ENCODE measurements at regions of chr2 and their contacts with region 1.

Region 1: DNA sequence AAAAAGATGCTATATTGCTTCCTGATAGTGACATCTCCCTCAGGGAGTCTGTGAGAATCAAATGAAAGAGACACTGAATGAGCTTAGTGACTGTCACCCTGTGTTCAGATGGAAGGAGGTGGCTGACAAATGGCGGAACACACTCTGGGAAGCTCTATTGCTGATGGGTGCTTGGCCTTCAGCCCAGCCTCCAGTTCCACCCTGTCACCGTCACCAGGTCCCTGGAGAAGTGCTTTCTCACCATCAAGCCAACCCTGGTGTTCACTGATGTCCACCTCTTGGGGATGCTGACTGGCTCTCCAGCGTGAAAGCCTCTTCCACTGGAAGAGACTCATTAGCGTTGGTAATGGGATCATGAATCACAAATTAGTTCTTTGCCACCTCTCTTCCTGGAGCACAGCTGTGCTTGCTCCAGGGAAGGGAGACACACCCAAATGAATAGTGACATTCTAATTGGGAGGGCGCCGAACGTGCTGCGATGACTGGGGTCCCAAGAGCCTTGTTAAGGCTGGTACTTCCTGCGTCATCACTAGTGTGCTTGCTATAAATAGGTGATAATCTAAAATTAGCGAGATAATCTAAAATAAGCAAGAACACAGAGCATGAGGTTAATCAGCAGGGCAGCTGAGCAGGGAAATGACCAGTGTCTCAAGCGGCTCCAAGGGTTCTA is 154.0 kb downstream of the CLIP4 start:
- DNase-seq: no peak
- ATAC-seq: peak in 6 of 8 donors; percentile 40 to 85 (median 68)
- H3K4me3 ChIP-seq: no peak overlapping the region
- H3K27ac ChIP-seq: no peak overlapping the region
- H3K4me1 ChIP-seq: peaks cover 0 to 14% (median 4%) of the 10 kb centered on the region in 9 donors
- H3K27me3 ChIP-seq: peaks cover 0 to 20% (median 2%) of the 10 kb centered on the region in 7 donors
- CTCF ChIP-seq: no peak

Region 2: GRCh38 chr2:27980242-27980641 is 1289.0 kb before region 1 on chr2:
- intact Hi-C with region 1: loop called in 1 of 10 experiments (anchors 5 kb)
- DNase-seq: no peak
- ATAC-seq: no peak
- H3K4me3 ChIP-seq: no peak overlapping the region
- H3K27ac ChIP-seq: no peak overlapping the region
- H3K4me1 ChIP-seq: peaks cover 0 to 13% (median 0%) of the 10 kb centered on the region in 9 donors
- H3K27me3 ChIP-seq: no peaks in the 10 kb centered on the region
- CTCF ChIP-seq: no peak

Region 3: GRCh38 chr2:28681158-28681571 is 588.1 kb before region 1 on chr2:
- intact Hi-C with region 1: no loop called
- DNase-seq: no peak
- ATAC-seq: peak in 3 of 8 donors; percentile 23 to 48 (median 38)
- H3K4me3 ChIP-seq: no peak overlapping the region
- H3K27ac ChIP-seq: peak overlapping the region in 8 of 10 donors; percentile 34 to 84 (median 76)
- H3K4me1 ChIP-seq: peaks cover 5 to 79% (median 61%) of the 10 kb centered on the region in 9 donors
- H3K27me3 ChIP-seq: no peaks in the 10 kb centered on the region
- CTCF ChIP-seq: no peak

Region 4: DNA sequence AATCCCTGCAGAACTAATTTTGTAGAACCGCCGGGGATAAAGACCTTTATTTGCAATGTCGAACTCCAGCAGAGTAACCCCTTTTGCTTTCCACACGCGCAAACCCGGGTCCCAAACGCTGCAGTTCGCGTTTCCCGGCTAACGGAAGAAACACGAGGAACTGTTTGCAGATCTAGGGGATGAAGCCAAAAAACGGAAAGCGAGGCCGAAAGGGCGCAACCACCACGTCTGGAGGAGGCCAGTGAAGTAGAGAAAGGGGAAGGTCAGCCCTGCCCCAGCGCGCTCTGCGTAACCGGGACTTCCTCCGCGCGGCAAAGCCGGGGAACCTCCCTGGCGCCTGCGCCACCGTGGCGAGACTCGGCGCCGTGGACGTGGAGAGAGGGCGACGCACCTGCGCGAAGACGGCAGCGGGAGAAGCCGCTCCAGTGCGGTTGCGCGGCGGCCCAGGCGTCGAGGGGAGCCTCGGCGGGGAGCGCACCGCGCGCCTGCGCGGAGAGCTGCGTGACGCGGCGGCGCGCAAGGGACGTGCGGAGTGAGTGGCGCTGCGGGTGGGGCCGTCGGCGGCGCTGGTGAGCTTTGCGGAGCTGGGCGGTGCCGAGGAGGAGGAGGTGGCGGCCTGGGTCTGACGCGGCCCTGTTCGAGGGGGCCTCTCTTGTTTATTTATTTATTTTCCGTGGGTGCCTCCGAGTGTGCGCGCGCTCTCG is 517.8 kb before region 1 on chr2 and contains the start of gene PPP1CB:
- intact Hi-C with region 1: no loop called
- DNase-seq: peak; percentile 94 to 97
- ATAC-seq: peak; percentile 92 to 98 (median 94)
- H3K4me3 ChIP-seq: peak within 1 kb of the TSS; percentile 76 to 98 (median 94)
- H3K27ac ChIP-seq: peak within 1 kb of the TSS; percentile 95 to 100 (median 100)
- H3K4me1 ChIP-seq: peaks cover 8 to 56% (median 44%) of the 10 kb centered on the region in 9 donors
- H3K27me3 ChIP-seq: no peaks in the 10 kb centered on the region
- CTCF ChIP-seq: peak in 8 of 9 donors; percentile 21 to 55 (median 38)
- total RNA-seq, gene PPP1CB: 381 to 525 (median 432) TPM

Region 5: GRCh38 chr2:29165362-29166236 is 103.6 kb before region 1 on chr2:
- intact Hi-C with region 1: no loop called
- DNase-seq: no peak
- ATAC-seq: no peak
- H3K4me3 ChIP-seq: no peak overlapping the region
- H3K27ac ChIP-seq: no peak overlapping the region
- H3K4me1 ChIP-seq: no peaks in the 10 kb centered on the region
- H3K27me3 ChIP-seq: no peaks in the 10 kb centered on the region
- CTCF ChIP-seq: no peak